Prostate gland (tissue), 2 donors: ENCODE measurements at regions of chr20 and their contacts with region 1.

Region 1: GRCh38 chr20:17995967-17996819 is 27.4 kb downstream of the MGME1 start:
- DNase-seq: peak; percentile 31
- H3K4me3 ChIP-seq: no peak overlapping the region
- H3K27ac ChIP-seq: no peak overlapping the region
- H3K4me1 ChIP-seq: no peaks in the 10 kb centered on the region
- H3K27me3 ChIP-seq: no peaks in the 10 kb centered on the region
- CTCF ChIP-seq: peak; percentile 75 to 94 (median 81)
- POLR2A ChIP-seq: no peak

Region 2: GRCh38 chr20:17161673-17162481 is 834.3 kb before region 1 on chr20:
- intact Hi-C with region 1: no loop called
- DNase-seq: no peak
- H3K4me3 ChIP-seq: no peak overlapping the region
- H3K27ac ChIP-seq: no peak overlapping the region
- H3K4me1 ChIP-seq: no peaks in the 10 kb centered on the region
- H3K27me3 ChIP-seq: no peaks in the 10 kb centered on the region
- CTCF ChIP-seq: no peak
- POLR2A ChIP-seq: no peak

Region 3: DNA sequence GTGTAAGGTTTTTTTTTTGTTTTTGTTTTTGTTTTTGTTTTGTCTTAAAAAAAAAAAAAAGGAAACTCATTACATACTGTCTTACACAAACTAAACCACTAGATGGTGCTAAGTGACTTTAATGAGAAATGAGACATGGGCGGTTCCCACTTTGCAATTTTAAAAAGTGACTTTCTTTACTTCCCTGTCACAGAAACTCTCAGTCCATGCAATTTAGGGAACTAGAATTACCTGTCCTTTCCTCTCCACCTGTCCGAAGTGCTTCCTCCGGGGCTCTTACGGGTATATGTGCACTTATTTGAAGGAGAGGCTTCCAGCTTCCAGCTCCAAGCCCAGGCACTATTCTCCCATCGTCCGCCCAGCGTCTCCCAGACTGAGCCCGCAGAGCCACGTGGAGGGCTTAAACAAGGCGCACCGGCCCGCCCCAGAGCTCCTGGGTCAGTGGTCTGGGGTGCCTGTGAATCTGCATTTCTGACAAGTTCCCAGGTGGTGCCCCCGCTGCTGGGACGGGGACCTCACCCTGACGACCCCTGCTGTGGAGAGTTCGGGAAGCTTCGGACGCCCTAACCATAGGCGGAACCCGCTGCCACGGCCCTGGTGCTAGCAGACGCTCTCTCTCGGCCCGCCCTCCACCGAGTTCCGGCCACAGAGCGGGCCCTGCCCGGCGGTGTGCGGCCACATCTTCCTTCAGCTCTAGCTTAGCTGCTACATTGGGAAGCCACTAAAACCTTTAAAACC is 491.1 kb before region 1 on chr20:
- intact Hi-C with region 1: loop called (anchors 5 kb)
- DNase-seq: peak; percentile 18
- H3K4me3 ChIP-seq: peak overlapping the region; percentile 30 to 34
- H3K27ac ChIP-seq: peak overlapping the region in 1 of 2 donors; percentile 15
- H3K4me1 ChIP-seq: no peaks in the 10 kb centered on the region
- H3K27me3 ChIP-seq: no peaks in the 10 kb centered on the region
- CTCF ChIP-seq: peak; percentile 60 to 77 (median 68)
- POLR2A ChIP-seq: no peak

Region 4: DNA sequence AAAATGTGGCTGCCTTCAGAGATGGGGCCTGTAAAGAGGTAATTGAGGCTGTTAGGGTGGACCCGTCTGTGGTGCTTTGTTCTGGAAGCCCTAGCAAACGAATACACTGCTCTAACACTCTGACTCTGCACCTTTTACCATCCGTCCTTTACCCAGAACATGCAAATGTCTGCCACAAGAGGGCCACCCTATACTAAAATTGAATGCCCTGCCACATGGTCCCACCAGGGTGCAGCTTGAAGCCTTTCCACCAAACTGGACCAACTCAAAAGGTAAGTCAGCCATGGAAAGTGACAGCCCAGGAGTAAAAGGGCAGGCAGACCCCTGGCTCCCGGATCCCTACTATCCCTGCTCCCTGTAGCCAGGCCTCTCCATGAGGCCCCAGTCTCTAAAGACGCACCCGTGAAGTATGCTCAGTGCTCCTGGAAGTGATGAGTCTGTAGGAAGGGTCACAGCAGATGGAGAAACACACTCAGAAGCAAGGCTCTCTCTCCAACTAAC is 459.2 kb before region 1 on chr20:
- intact Hi-C with region 1: loop called (anchors 10 kb)
- DNase-seq: peak; percentile 75
- H3K4me3 ChIP-seq: no peak overlapping the region
- H3K27ac ChIP-seq: no peak overlapping the region
- H3K4me1 ChIP-seq: no peaks in the 10 kb centered on the region
- H3K27me3 ChIP-seq: no peaks in the 10 kb centered on the region
- CTCF ChIP-seq: peak; percentile 74 to 97 (median 93)
- POLR2A ChIP-seq: no peak

Region 5: GRCh38 chr20:17946572-17947473 is 49.4 kb before region 1 on chr20:
- intact Hi-C with region 1: loop called (anchors 5 kb)
- DNase-seq: no peak
- H3K4me3 ChIP-seq: no peak overlapping the region
- H3K27ac ChIP-seq: no peak overlapping the region
- H3K4me1 ChIP-seq: no peaks in the 10 kb centered on the region
- H3K27me3 ChIP-seq: no peaks in the 10 kb centered on the region
- CTCF ChIP-seq: no peak
- POLR2A ChIP-seq: no peak

Region 6: DNA sequence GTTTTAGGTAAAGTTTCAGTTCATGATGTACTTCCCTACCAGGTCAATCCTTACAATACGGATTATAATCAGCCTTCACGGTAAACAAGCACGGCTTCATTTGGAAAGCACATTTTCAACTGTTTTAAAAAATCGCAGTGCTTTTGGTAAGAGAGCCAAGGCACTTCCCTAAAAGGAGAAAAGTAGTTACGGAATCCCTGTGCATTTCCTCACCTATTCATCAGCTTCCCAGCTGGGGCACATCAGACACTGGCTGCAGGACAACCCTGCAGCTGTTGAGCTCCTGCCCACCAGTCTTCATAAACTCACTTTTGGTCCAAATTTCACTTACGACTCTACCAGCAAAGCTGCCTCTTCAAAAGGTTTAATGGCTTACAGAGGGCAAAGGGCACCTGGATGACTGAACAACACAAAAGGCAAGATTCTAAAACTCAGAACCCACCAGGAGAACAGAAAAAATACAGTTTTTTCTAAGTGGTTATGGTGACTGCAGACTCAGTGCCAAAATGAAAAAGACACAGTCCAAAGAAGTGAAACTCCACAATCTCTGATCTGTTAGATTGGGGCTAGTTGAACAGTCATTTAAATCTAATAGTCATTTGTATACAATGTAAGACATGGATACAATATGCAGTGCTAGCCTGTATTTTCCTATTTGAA is 35.1 kb before region 1 on chr20:
- intact Hi-C with region 1: loop called (anchors 5 kb)
- DNase-seq: no peak
- H3K4me3 ChIP-seq: no peak overlapping the region
- H3K27ac ChIP-seq: peak overlapping the region; percentile 20 to 44
- H3K4me1 ChIP-seq: no peaks in the 10 kb centered on the region
- H3K27me3 ChIP-seq: no peaks in the 10 kb centered on the region
- CTCF ChIP-seq: no peak
- POLR2A ChIP-seq: no peak